Panc1 (cell line): ENCODE measurements at regions of chr1 and their contacts with region 1.

Region 1: GRCh38 chr1:8182034-8182761 is 135.7 kb upstream of the SLC45A1 start:
- DNase-seq: peak; percentile 99
- ATAC-seq: peak; percentile 96
- H3K4me3 ChIP-seq: no peak overlapping the region
- H3K27ac ChIP-seq: peak overlapping the region; percentile 100
- H3K4me1 ChIP-seq: peaks cover 19% of the 10 kb centered on the region
- H3K27me3 ChIP-seq: no peaks in the 10 kb centered on the region
- CTCF ChIP-seq: no peak

Region 2: DNA sequence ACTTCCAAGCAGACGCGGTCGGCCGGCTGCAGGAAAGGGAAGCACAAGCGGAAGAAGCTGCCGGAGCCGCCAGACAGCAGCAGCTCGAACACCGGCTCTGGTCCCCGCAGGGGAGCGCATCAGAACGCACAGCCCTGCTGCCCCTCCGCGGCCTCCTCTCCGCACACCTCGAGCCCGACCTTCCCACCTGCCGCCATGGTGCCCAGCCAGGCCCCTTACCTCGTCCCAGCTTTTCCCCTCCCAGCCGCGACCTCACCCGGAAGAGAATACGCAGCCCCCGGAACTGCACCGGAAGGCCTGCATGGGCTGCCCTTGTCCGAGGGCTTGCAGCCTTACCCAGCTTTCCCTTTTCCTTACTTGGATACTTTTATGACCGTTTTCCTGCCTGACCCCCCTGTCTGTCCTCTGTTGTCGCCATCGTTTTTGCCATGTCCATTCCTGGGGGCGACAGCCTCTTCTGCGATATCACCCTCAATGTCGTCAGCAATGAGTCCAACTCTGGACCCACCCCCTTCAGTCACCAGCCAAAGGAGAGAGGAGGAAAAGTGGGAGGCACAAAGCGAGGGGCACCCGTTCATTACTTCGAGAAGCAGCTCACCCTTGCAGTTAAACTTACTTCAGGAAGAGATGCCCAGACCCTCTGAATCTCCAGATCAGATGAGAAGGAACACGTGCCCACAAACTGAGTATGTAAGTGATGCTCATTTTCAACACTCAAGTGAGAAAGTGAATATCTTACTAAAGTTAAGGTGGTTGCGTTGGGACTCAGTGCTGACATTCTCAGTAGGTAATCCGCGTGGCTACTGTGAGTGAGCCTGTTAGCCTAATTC is 354.9 kb before region 1 on chr1:
- CTCF ChIA-PET with region 1: no interaction called
- POLR2A ChIA-PET with region 1: no interaction called
- in situ Hi-C with region 1: no loop called
- intact Hi-C with region 1: no loop called
- DNase-seq: no peak
- ATAC-seq: no peak
- H3K4me3 ChIP-seq: no peak overlapping the region
- H3K27ac ChIP-seq: no peak overlapping the region
- H3K4me1 ChIP-seq: no peaks in the 10 kb centered on the region
- H3K27me3 ChIP-seq: no peaks in the 10 kb centered on the region
- CTCF ChIP-seq: no peak

Region 3: DNA sequence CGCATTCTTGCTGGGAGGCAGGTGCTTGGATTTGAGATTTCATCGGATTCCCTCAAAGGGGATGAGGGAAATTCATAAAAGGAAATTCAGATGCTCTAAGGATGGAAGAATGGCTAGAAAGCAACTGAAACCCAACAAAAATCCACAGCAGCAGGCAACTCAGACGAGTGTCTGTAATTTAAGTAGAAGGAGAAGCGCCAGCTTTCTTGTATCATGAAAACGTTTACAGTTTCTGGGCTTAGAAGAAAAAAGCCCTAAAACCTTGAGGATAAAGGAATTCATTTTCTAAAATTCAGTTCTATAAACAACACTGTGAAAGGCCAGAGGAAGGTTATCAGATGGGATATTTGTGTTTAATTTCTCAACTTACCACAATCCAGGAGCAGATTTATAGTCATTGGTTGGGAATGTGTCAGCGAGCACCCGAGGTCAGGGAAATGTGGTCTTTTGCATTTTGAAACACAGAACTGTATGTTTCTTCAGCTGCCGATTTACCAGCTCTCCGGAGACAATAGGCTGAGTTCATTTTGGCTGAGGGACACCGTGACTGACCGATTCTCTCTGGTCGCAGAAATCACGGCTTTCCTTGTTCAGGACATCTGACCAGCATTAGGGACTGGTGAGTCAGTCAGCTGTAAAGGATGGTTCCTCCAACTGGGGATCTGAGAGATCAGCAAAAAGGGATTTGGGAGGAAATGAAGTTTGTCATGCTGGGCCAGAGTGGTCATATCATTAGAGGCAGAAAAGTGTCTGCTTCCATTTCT is 44.5 kb before region 1 on chr1:
- CTCF ChIA-PET with region 1: no interaction called
- POLR2A ChIA-PET with region 1: interaction called, 6 read pairs
- in situ Hi-C with region 1: no loop called
- intact Hi-C with region 1: loop called (anchors 1 kb)
- DNase-seq: peak; percentile 85
- ATAC-seq: peak; percentile 69
- H3K4me3 ChIP-seq: peak overlapping the region; percentile 1 to 30; a peak in 3 of 4 replicates
- H3K27ac ChIP-seq: peak overlapping the region; percentile 98
- H3K4me1 ChIP-seq: peaks cover 55% of the 10 kb centered on the region
- H3K27me3 ChIP-seq: no peaks in the 10 kb centered on the region
- CTCF ChIP-seq: no peak

Region 4: DNA sequence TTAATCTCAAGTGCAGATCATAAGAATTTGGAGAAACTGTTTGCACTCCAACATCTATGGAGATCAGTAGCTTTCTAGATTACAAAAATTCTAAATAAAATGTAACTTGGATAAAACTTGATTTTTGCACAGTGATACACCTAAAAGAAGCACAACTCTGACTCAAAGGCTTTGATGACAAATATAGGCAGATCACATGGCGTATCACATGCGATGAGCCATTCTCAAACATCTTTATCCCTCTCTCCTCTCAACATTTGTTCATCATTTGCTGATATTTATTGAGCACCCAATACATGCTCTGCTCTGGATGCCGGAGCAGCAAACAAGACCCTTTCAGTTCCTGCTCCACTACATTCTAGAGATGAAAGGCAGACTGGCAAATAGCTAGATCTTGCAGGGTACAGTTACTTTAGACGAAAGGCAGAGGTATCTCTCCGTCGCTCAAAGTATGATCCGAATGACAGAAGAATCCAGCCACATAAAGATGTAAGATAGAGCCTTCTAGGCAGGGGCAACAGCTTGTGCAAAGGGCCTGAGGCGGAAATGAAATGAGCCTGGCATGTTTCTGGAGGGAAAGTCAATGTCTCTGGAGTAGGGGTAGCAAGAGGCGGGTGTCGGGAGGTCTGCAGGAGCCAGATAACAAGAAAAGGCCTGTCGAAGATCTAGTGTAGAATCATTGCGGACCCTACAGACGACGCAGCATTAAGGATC is 10.3 kb before region 1 on chr1:
- CTCF ChIA-PET with region 1: interaction called, 8 read pairs
- POLR2A ChIA-PET with region 1: interaction called, 14 read pairs
- in situ Hi-C with region 1: no loop called
- intact Hi-C with region 1: no loop called
- DNase-seq: no peak
- ATAC-seq: no peak
- H3K4me3 ChIP-seq: no peak overlapping the region
- H3K27ac ChIP-seq: peak overlapping the region; percentile 64
- H3K4me1 ChIP-seq: peaks cover 31% of the 10 kb centered on the region
- H3K27me3 ChIP-seq: no peaks in the 10 kb centered on the region
- CTCF ChIP-seq: no peak

Region 5: GRCh38 chr1:8348777-8349491 is 166.7 kb after region 1 on chr1:
- CTCF ChIA-PET with region 1: no interaction called
- POLR2A ChIA-PET with region 1: no interaction called
- in situ Hi-C with region 1: no loop called
- intact Hi-C with region 1: no loop called
- DNase-seq: no peak
- ATAC-seq: peak; percentile 62
- H3K4me3 ChIP-seq: no peak overlapping the region
- H3K27ac ChIP-seq: peak overlapping the region; percentile 82
- H3K4me1 ChIP-seq: peaks cover 19% of the 10 kb centered on the region
- H3K27me3 ChIP-seq: no peaks in the 10 kb centered on the region
- CTCF ChIP-seq: peak; percentile 95